Astrocyte of the cerebellum (primary cell): ENCODE measurements at regions of chr9 and their contacts with region 1.

Region 1: DNA sequence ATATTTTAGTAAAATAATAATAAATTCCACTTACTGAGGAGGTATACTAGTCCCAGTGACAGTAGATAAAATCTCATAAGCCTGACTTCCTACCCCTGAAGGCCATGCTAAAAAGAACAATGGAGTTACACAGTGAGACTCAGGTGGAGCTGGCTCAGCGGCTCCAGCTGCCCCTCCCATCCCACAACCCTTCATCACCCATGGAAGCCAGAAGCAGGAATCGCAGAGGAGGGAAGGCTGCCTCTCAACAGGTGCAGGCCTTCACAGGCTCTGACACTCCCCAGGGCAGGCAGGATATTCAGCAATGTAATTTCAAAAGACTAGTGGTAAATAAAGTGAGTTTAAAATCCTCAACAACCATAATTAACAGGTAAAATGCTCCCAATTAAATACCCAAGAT is 67.5 kb downstream of the FANCC start:
- DNase-seq: no peak
- H3K4me3 ChIP-seq: no peak overlapping the region
- CTCF ChIP-seq: no peak

Region 2: DNA sequence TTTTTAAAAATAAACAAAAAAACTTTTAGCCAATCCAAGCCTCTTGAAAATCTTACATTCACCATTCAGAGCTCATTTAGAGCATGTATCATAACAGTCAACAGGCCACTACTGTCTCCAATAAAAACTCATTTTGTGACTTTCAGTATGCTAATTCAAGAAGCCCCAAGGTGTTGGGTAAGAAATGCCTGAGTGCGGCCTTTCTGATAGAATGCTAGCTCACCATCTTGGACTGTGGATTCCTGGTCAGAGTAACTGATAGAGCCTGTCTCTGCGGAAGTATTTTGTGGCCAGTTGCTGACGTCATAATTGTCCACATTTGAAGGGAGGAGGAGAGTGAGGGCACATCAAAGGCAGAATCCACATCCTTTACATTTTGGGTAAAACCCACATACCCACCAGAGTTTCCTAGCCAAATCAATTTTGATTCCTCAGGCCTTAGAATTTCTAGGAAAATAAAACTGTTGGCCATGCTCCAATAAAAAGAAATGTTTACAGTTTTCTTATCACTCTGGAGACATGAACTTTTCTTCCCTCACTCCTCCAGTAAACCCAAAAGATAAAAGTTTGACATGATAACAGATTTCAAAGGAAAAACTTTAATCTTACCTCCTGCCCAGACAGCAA is 584.4 kb after region 1 on chr9:
- in situ Hi-C with region 1: loop called (anchors 10 kb)
- DNase-seq: peak; percentile 5
- H3K4me3 ChIP-seq: no peak overlapping the region
- CTCF ChIP-seq: no peak